ENCODE measurements at regions of chr1 and their contacts with region 1.

Region 1: DNA sequence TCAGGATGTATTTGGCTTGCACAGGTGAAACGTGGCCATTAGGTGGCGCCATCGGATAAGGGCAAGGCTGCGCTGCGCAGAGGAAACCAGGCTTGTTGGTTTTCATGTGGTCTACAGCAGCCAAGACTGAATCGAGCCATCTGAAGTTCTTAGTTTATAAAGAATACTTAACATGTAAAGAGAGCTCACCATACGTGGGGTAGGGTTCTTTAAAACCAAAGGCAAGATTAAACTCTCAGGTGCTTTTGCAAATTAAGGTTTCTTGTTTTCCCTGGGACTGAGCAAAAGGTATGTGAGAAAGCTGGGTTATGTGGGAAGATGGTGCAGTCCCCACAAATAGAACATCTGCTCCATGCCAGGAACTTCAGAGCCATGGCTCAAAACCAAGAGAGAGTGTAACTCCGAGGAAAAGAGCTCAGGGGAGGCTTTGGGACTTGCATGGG is 9.3 kb downstream of the MASP2 start:
- DNase-seq: peak; percentile 83
- H3K4me3 ChIP-seq: peak overlapping the region in 1 of 2 experiments; percentile 16; a peak in 1 of 4 replicates
- H3K27ac ChIP-seq: no peak overlapping the region
- H3K4me1 ChIP-seq: no peaks in the 10 kb centered on the region
- H3K27me3 ChIP-seq: no peaks in the 10 kb centered on the region
- CTCF ChIP-seq: peak; percentile 98
- EP300 ChIP-seq: no peak
- RAD21 ChIP-seq: peak; percentile 100

Region 2: DNA sequence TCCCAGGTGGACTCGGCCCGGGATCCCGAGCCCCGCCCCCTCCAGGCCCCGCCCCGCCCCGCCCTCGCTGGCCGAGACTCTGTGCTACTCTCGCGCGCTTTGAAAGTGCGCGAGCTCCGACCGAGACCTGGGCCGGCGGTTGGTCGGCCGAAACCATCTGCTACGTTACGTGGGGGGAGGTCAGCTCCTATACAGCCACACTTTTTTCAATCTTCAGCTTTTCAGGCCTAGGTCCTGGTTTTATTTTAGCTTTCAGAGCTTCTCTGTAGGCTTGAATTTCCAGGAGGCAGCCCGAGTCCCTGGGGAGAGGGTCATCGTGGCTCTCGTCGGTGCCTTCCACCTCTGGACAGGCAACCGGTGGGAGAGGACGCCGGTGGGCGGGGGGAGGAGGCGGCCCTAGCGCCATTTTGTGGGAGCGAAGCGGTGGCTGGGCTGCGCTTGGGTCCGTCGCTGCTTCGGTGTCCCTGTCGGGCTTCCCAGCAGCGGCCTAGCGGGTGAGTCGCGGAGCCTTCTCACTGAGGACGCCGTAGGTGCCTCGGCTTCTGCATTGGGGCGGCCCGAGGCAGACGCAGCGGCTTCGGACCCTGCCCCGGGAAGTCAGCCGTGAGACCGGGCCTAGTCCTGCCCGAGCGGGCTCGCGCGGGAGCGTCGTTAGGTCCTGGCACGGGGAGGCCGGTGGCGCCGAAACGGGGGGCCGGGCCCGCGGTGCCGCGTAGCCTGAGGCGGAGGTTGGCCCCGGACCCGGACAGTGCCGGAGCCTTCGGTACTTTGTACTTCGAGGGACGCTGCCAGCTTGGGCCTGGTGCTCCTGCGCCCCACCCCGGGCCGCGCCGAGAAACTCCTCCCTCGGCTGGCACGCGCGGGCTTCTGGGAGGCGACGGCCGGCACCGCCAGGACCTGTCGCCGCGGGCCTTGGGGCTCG is 25.2 kb before region 1 on chr1 and contains the start of gene TARDBP:
- CTCF ChIA-PET with region 1: interaction called, 12 read pairs
- POLR2A ChIA-PET with region 1: no interaction called
- DNase-seq: peak; percentile 98
- H3K4me3 ChIP-seq: peak within 1 kb of the TSS; percentile 84 to 98
- H3K27ac ChIP-seq: peak within 1 kb of the TSS; percentile 93
- H3K4me1 ChIP-seq: peaks cover 10 to 13% of the 10 kb centered on the region in 2 experiments; a peak in 3 of 4 replicates
- H3K27me3 ChIP-seq: no peaks in the 10 kb centered on the region
- CTCF ChIP-seq: no peak
- EP300 ChIP-seq: peak in 1 of 2 experiments; percentile 73; a peak in 1 of 4 replicates
- RAD21 ChIP-seq: no peak
- polyA plus RNA-seq, gene TARDBP: 156 and 207 TPM in 2 replicates

Region 3: GRCh38 chr1:11059990-11060830 is 22.4 kb after region 1 on chr1 and contains the start of gene SRM:
- CTCF ChIA-PET with region 1: interaction called, 118 read pairs
- POLR2A ChIA-PET with region 1: interaction called, 3 read pairs
- DNase-seq: peak; percentile 99
- H3K4me3 ChIP-seq: peak within 1 kb of the TSS; percentile 86 to 87
- H3K27ac ChIP-seq: peak within 1 kb of the TSS; percentile 69 to 85
- H3K4me1 ChIP-seq: peaks cover 5 to 13% of the 10 kb centered on the region in 2 experiments; a peak in 3 of 4 replicates
- H3K27me3 ChIP-seq: no peaks in the 10 kb centered on the region
- CTCF ChIP-seq: no peak
- EP300 ChIP-seq: no peak
- RAD21 ChIP-seq: no peak
- polyA plus RNA-seq, gene SRM: 60.9 and 105 TPM in 2 replicates

Region 4: GRCh38 chr1:11099310-11100149 is 61.8 kb after region 1 on chr1 and contains the start of gene EXOSC10:
- CTCF ChIA-PET with region 1: interaction called, 20 read pairs
- POLR2A ChIA-PET with region 1: interaction called, 4 read pairs
- DNase-seq: peak; percentile 98
- H3K4me3 ChIP-seq: peak within 1 kb of the TSS; percentile 81 to 90
- H3K27ac ChIP-seq: peak within 1 kb of the TSS; percentile 56 to 64
- H3K4me1 ChIP-seq: peaks cover 6 to 7% of the 10 kb centered on the region in 2 experiments; a peak in 3 of 4 replicates
- H3K27me3 ChIP-seq: no peaks in the 10 kb centered on the region
- CTCF ChIP-seq: no peak
- EP300 ChIP-seq: no peak
- RAD21 ChIP-seq: no peak
- polyA plus RNA-seq, gene EXOSC10: 62.5 and 79.8 TPM in 2 replicates

Region 5: GRCh38 chr1:11180342-11180744 is 142.6 kb after region 1 on chr1:
- CTCF ChIA-PET with region 1: interaction called, 12 read pairs
- POLR2A ChIA-PET with region 1: no interaction called
- DNase-seq: peak; percentile 72
- H3K4me3 ChIP-seq: no peak overlapping the region
- H3K27ac ChIP-seq: peak overlapping the region; percentile 64 to 80
- H3K4me1 ChIP-seq: peaks cover 28 to 30% of the 10 kb centered on the region in 2 experiments
- H3K27me3 ChIP-seq: no peaks in the 10 kb centered on the region
- CTCF ChIP-seq: no peak
- EP300 ChIP-seq: peak; percentile 55 to 93; a peak in 3 of 4 replicates
- RAD21 ChIP-seq: no peak

Region 6: GRCh38 chr1:11248155-11248554 is 210.4 kb after region 1 on chr1:
- CTCF ChIA-PET with region 1: interaction called, 38 read pairs
- POLR2A ChIA-PET with region 1: no interaction called
- DNase-seq: no peak
- H3K4me3 ChIP-seq: no peak overlapping the region
- H3K27ac ChIP-seq: no peak overlapping the region
- H3K4me1 ChIP-seq: no peaks in the 10 kb centered on the region
- H3K27me3 ChIP-seq: no peaks in the 10 kb centered on the region
- CTCF ChIP-seq: no peak
- EP300 ChIP-seq: no peak
- RAD21 ChIP-seq: 0 out of 2 replicates have a peak, but pooled peaks have one; percentile 7

Region 7: GRCh38 chr1:11645670-11646265 is 608.0 kb after region 1 on chr1:
- CTCF ChIA-PET with region 1: interaction called, 42 read pairs
- POLR2A ChIA-PET with region 1: no interaction called
- DNase-seq: peak; percentile 83
- H3K4me3 ChIP-seq: no peak overlapping the region
- H3K27ac ChIP-seq: no peak overlapping the region
- H3K4me1 ChIP-seq: peaks cover 0 to 9% of the 10 kb centered on the region in 2 experiments; a peak in 1 of 4 replicates
- H3K27me3 ChIP-seq: no peaks in the 10 kb centered on the region
- CTCF ChIP-seq: peak; percentile 83
- EP300 ChIP-seq: no peak
- RAD21 ChIP-seq: peak; percentile 88